Psoas muscle (tissue), 8 donors: ENCODE measurements at regions of chr13 and their contacts with region 1.

Region 1: GRCh38 chr13:79480954-79481684 is at the start of gene NDFIP2:
- DNase-seq: peak; percentile 87 to 92
- ATAC-seq: peak; percentile 92 to 94 (median 93)
- H3K4me3 ChIP-seq: peak within 1 kb of the TSS; percentile 82
- H3K27ac ChIP-seq: peak within 1 kb of the TSS; percentile 89
- H3K4me1 ChIP-seq: peaks cover 31% of the 10 kb centered on the region
- H3K27me3 ChIP-seq: no peaks in the 10 kb centered on the region
- CTCF ChIP-seq: peak; percentile 5
- total RNA-seq, gene NDFIP2: 26.0 to 48.2 (median 34.9) TPM

Region 2: DNA sequence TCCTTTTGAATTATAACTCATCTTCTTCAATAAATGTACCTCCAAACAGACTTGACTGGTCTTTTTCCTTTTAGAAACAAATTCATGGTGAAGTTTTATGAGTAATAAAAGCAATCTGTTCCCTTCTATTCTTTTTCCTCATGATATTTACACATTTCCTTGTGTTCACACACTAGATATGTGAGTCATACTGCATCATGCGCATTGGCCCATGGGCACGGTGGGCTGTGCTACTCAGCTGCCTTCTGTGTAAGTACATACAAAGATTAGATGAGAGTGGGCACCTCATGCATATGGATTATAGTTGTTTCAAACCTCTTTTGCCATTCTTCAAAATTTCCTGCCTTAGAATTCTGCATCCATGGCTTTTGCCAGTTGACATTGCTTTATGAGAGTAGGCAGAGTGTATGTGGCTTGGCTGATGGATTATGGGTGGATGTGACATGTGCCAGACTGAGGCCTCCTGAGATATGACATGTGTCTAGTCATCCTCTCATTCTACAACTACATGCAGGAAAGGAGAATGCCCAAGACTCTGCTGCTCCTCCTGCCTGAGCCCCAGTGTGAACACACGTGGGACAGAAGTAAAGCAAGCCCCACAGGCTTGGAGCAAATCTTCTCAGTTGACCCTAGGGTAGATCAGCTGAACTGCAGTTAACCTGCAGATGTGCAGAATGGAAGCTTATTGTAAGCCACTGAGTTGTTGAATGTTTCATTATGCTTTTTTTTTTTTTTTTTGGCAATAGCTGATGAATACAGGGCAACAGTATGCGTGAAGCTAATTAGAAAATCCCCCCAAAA is 185.0 kb before region 1 on chr13:
- intact Hi-C with region 1: no loop called
- DNase-seq: no peak
- ATAC-seq: no peak
- H3K4me3 ChIP-seq: no peak overlapping the region
- H3K27ac ChIP-seq: no peak overlapping the region
- H3K4me1 ChIP-seq: no peaks in the 10 kb centered on the region
- H3K27me3 ChIP-seq: no peaks in the 10 kb centered on the region
- CTCF ChIP-seq: no peak

Region 3: DNA sequence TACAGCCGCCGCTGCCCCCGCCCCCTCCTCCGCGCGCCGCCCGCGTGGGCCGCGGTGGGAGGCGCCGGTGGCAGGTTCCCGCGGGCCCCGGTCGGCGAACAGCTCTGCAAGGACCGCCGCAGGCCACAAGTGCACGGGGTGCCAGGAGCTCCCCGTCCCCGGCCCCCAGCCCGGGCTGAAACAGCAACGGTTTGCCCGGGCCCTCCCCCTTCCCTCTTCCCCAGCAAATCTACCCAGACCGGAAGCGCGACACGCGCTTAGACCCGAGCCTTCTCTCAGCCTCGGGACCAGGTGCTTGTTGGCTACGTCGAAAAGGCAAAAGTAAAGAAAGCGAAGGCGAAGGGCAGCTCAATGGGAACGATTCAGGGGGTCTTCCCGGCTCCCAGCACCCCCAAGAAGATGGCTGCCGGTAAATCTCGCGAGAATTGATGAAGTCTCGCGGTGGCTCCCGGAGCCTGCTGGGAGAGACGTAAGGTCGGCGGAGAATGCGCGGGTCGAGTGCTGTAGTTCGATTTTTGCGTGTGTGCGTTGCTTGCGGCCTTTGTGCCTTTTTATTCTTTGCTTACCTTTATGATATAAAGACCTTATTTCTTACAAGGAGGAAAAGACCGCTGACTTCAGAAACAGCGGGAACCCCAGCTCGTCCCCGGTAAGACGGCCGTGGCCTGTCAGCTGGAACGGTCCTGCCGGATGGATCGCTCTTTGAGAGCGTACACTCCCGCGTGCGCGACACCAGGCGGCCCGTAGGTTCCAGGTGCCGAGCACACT is 75.1 kb before region 1 on chr13 and contains the start of gene RBM26:
- intact Hi-C with region 1: loop called in 1 of 2 experiments (anchors 5 kb)
- DNase-seq: peak; percentile 91 to 97
- ATAC-seq: peak; percentile 92 to 95 (median 92)
- H3K4me3 ChIP-seq: peak within 1 kb of the TSS; percentile 72
- H3K27ac ChIP-seq: peak within 1 kb of the TSS; percentile 95
- H3K4me1 ChIP-seq: peaks cover 46% of the 10 kb centered on the region
- H3K27me3 ChIP-seq: no peaks in the 10 kb centered on the region
- CTCF ChIP-seq: peak; percentile 18
- total RNA-seq, gene RBM26: 21.4 to 36.5 (median 25.6) TPM

Region 4: GRCh38 chr13:79434556-79434955 is 46.6 kb before region 1 on chr13:
- intact Hi-C with region 1: loop called in 1 of 2 experiments (anchors 5 kb)
- DNase-seq: no peak
- ATAC-seq: no peak
- H3K4me3 ChIP-seq: no peak overlapping the region
- H3K27ac ChIP-seq: no peak overlapping the region
- H3K4me1 ChIP-seq: no peaks in the 10 kb centered on the region
- H3K27me3 ChIP-seq: no peaks in the 10 kb centered on the region
- CTCF ChIP-seq: no peak

Region 5: GRCh38 chr13:79533781-79534400 is 52.8 kb after region 1 on chr13:
- intact Hi-C with region 1: loop called (anchors 5 to 10 kb)
- DNase-seq: no peak
- ATAC-seq: no peak
- H3K4me3 ChIP-seq: no peak overlapping the region
- H3K27ac ChIP-seq: no peak overlapping the region
- H3K4me1 ChIP-seq: no peaks in the 10 kb centered on the region
- H3K27me3 ChIP-seq: no peaks in the 10 kb centered on the region
- CTCF ChIP-seq: no peak